B cell (primary cell): ENCODE measurements at regions of chr1 and their contacts with region 1.

Region 1: GRCh38 chr1:156797212-156797871 is 19.3 kb downstream of the SH2D2A start:
- DNase-seq: peak; percentile 64
- ATAC-seq: peak; percentile 45
- H3K4me3 ChIP-seq: no peak overlapping the region
- H3K4me3 Mint-ChIP-seq: no peak overlapping the region
- H3K27ac ChIP-seq: no peak overlapping the region
- H3K27ac Mint-ChIP-seq: no peak overlapping the region
- H3K4me1 ChIP-seq: no peaks in the 10 kb centered on the region
- H3K4me1 Mint-ChIP-seq: peaks cover 5% of the 10 kb centered on the region
- H3K27me3 ChIP-seq: no peaks in the 10 kb centered on the region
- H3K27me3 Mint-ChIP-seq: no peaks in the 10 kb centered on the region
- CTCF ChIP-seq: peak; percentile 73

Region 2: GRCh38 chr1:156608036-156608674 is 189.2 kb before region 1 on chr1:
- CTCF ChIA-PET with region 1: no interaction called
- POLR2A ChIA-PET with region 1: no interaction called
- intact Hi-C with region 1: no loop called
- DNase-seq: peak; percentile 86
- ATAC-seq: peak; percentile 81
- H3K4me3 ChIP-seq: no peak overlapping the region
- H3K4me3 Mint-ChIP-seq: peak overlapping the region; percentile 71
- H3K27ac ChIP-seq: no peak overlapping the region
- H3K27ac Mint-ChIP-seq: peak overlapping the region; percentile 81
- H3K4me1 ChIP-seq: peaks cover 22 to 28% of the 10 kb centered on the region in 2 donors
- H3K4me1 Mint-ChIP-seq: peaks cover 26% of the 10 kb centered on the region
- H3K27me3 ChIP-seq: peaks cover 0 to 10% (median 3%) of the 10 kb centered on the region in 4 experiments
- H3K27me3 Mint-ChIP-seq: peaks cover 10% of the 10 kb centered on the region
- CTCF ChIP-seq: peak; percentile 80

Region 3: DNA sequence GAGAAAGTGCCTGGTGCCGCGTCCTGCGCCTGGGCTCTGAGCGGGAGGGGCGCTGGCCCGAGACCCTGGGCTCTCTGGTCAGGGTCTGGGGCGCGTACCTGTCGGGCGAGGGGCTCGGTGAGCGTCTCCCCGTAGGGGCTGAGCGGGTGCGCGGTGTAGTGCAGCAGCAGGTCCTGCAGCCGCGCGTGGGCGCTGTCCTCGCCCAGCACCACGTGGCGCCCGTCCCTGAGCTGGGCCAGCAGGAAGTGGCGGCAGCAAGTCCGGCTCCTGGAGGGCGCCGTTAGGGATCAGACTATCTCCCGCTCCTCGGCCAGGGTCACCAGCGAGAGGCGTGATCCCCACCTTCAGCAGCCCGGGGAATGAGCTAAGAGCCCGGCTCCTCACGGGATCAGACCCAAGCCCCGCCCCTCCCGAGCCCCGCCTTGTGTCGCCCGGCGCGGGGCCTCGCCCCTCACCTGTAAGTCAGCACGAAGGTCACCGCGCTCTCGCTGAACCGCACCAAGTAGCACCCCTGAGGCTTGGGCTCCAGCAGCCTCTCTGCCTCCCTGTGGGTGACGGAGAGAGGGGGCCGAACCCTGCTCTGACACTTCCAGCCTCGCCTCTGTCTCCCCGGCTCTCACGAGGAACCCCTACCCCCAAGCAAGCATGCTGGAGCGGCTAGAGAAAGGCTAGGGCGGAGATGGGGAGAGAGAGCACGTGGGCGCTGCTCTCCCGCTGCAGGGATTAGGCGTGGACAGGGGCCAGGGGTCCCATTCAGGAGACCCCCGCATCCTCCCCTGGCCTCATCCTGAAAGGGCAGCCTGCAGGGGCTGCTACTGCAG is 16.6 kb after region 1 on chr1:
- CTCF ChIA-PET with region 1: interaction called, 11 read pairs
- POLR2A ChIA-PET with region 1: no interaction called
- intact Hi-C with region 1: no loop called
- DNase-seq: peak; percentile 77
- ATAC-seq: peak; percentile 72
- H3K4me3 ChIP-seq: peak overlapping the region; percentile 11 to 62 (median 56)
- H3K4me3 Mint-ChIP-seq: peak overlapping the region; percentile 91
- H3K27ac ChIP-seq: no peak overlapping the region
- H3K27ac Mint-ChIP-seq: peak overlapping the region; percentile 32
- H3K4me1 ChIP-seq: peaks cover 26 to 32% of the 10 kb centered on the region in 2 donors
- H3K4me1 Mint-ChIP-seq: peaks cover 34% of the 10 kb centered on the region
- H3K27me3 ChIP-seq: peaks cover 0 to 12% (median 0%) of the 10 kb centered on the region in 4 experiments
- H3K27me3 Mint-ChIP-seq: no peaks in the 10 kb centered on the region
- CTCF ChIP-seq: peak; percentile 75

Region 4: GRCh38 chr1:156838981-156839410 is 41.7 kb after region 1 on chr1:
- CTCF ChIA-PET with region 1: interaction called, 5 read pairs
- POLR2A ChIA-PET with region 1: interaction called, 11 read pairs
- intact Hi-C with region 1: no loop called
- DNase-seq: peak; percentile 60
- ATAC-seq: peak; percentile 56
- H3K4me3 ChIP-seq: no peak overlapping the region
- H3K4me3 Mint-ChIP-seq: no peak overlapping the region
- H3K27ac ChIP-seq: no peak overlapping the region
- H3K27ac Mint-ChIP-seq: no peak overlapping the region
- H3K4me1 ChIP-seq: no peaks in the 10 kb centered on the region
- H3K4me1 Mint-ChIP-seq: peaks cover 2% of the 10 kb centered on the region
- H3K27me3 ChIP-seq: peaks cover 0 to 44% (median 13%) of the 10 kb centered on the region in 4 experiments
- H3K27me3 Mint-ChIP-seq: peaks cover 71% of the 10 kb centered on the region
- CTCF ChIP-seq: peak; percentile 85

Region 5: DNA sequence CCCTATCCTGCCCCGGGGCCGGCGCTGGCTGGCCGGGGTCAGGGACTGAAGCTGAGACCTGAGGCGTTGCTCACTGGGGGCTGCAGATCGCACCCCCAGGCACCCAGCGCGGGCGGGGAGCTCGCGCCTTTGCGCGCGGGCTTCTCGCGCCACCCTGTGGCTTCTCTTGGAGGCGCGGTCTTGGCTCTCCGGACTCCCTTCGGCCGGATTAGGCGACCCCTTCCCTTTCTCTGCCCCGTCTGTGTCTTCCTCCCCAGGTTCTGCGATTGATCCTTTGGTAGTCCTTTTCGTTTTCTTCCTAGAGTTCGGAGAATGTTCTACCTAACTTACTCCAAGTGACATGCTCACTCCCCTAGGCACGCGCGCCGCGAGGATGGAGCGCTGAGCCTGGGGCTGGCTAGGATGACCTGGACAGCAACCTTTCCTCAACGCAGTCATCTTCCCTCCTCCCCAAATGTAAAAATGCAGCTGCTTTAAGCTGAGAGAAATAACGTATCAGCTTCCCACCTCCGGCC is 62.8 kb after region 1 on chr1:
- CTCF ChIA-PET with region 1: interaction called, 41 read pairs
- POLR2A ChIA-PET with region 1: no interaction called
- intact Hi-C with region 1: loop called (anchors 1 kb)
- DNase-seq: peak; percentile 71
- ATAC-seq: peak; percentile 73
- H3K4me3 ChIP-seq: peak overlapping the region in 4 of 5 experiments; percentile 15 to 54 (median 44)
- H3K4me3 Mint-ChIP-seq: peak overlapping the region; percentile 83
- H3K27ac ChIP-seq: no peak overlapping the region
- H3K27ac Mint-ChIP-seq: no peak overlapping the region
- H3K4me1 ChIP-seq: peaks cover 23 to 30% of the 10 kb centered on the region in 2 donors
- H3K4me1 Mint-ChIP-seq: peaks cover 18% of the 10 kb centered on the region
- H3K27me3 ChIP-seq: peaks cover 0 to 80% (median 39%) of the 10 kb centered on the region in 4 experiments
- H3K27me3 Mint-ChIP-seq: peaks cover 67% of the 10 kb centered on the region
- CTCF ChIP-seq: peak; percentile 73

Region 6: GRCh38 chr1:156892190-156893047 is 95.1 kb after region 1 on chr1:
- CTCF ChIA-PET with region 1: interaction called, 45 read pairs
- POLR2A ChIA-PET with region 1: no interaction called
- intact Hi-C with region 1: no loop called
- DNase-seq: peak; percentile 83
- ATAC-seq: peak; percentile 85
- H3K4me3 ChIP-seq: peak overlapping the region in 2 of 5 experiments; percentile 2 to 17
- H3K4me3 Mint-ChIP-seq: peak overlapping the region; percentile 78
- H3K27ac ChIP-seq: no peak overlapping the region
- H3K27ac Mint-ChIP-seq: no peak overlapping the region
- H3K4me1 ChIP-seq: peaks cover 21 to 24% of the 10 kb centered on the region in 2 donors
- H3K4me1 Mint-ChIP-seq: peaks cover 15% of the 10 kb centered on the region
- H3K27me3 ChIP-seq: peaks cover 0 to 66% (median 28%) of the 10 kb centered on the region in 4 experiments
- H3K27me3 Mint-ChIP-seq: peaks cover 68% of the 10 kb centered on the region
- CTCF ChIP-seq: peak; percentile 76